Ascending aorta (tissue), 2 donors: ENCODE measurements at regions of chr12 and their contacts with region 1.

Region 1: GRCh38 chr12:12562585-12563261 is at the start of gene DUSP16:
- DNase-seq: peak; percentile 84 to 97
- H3K4me3 ChIP-seq: peak within 1 kb of the TSS; percentile 96 to 97
- H3K27ac ChIP-seq: peak within 1 kb of the TSS; percentile 100
- H3K4me1 ChIP-seq: peaks cover 0 to 15% of the 10 kb centered on the region in 2 donors
- H3K27me3 ChIP-seq: no peaks in the 10 kb centered on the region
- CTCF ChIP-seq: no peak
- total RNA-seq, gene DUSP16: 54.8 TPM

Region 2: GRCh38 chr12:12266873-12267741 is 295.6 kb before region 1 on chr12 and contains the start of gene LRP6:
- intact Hi-C with region 1: loop called (anchors 5 kb)
- DNase-seq: peak; percentile 35 to 92
- H3K4me3 ChIP-seq: peak within 1 kb of the TSS; percentile 63 to 87
- H3K27ac ChIP-seq: peak within 1 kb of the TSS; percentile 99
- H3K4me1 ChIP-seq: peaks cover 0 to 4% of the 10 kb centered on the region in 2 donors
- H3K27me3 ChIP-seq: no peaks in the 10 kb centered on the region
- CTCF ChIP-seq: no peak
- total RNA-seq, gene LRP6: 70.0 TPM

Region 3: DNA sequence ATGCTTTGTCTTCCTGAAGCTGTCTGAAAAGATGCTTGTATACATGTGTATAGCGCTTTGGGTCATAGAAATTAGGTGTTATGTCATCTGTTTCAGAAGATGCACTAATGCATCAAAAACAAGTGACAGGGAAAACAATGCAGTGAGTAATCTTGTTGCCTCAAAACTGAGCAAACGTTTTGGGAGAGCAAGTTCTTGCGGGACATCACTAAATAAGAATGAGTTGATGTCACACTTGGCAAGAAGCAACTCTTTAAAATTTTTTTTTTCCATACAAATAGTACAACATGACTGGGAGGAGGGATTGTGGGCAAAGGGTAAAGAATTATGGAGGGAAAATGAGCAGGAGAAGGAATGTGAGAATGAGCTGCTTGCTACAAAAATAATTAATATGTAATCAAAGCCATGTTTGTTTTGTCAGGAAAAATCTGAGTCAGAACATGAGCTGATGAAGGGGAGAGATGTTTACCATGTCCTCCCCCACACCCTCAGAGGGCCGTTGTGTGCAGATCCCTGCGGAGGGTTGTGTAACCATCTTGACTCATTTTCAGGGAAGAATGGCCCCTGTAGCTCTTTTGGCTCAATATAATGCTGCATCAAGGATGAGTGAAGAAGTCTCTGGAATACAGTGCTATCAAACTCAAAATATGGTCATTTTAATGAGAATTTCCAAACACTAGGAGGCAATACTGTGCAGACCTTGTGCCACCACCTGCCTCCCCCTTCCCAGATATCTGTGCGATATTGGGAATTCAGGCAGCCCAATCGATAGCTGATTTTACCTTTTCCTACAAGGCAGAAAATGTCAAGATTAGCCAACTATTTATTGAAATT is 164.5 kb before region 1 on chr12:
- intact Hi-C with region 1: loop called (anchors 5 kb)
- DNase-seq: peak in 1 of 2 donors; percentile 86
- H3K4me3 ChIP-seq: peak overlapping the region in 1 of 2 donors; percentile 23
- H3K27ac ChIP-seq: peak overlapping the region; percentile 67 to 81
- H3K4me1 ChIP-seq: peaks cover 6 to 20% of the 10 kb centered on the region in 2 donors
- H3K27me3 ChIP-seq: no peaks in the 10 kb centered on the region
- CTCF ChIP-seq: no peak

Region 4: DNA sequence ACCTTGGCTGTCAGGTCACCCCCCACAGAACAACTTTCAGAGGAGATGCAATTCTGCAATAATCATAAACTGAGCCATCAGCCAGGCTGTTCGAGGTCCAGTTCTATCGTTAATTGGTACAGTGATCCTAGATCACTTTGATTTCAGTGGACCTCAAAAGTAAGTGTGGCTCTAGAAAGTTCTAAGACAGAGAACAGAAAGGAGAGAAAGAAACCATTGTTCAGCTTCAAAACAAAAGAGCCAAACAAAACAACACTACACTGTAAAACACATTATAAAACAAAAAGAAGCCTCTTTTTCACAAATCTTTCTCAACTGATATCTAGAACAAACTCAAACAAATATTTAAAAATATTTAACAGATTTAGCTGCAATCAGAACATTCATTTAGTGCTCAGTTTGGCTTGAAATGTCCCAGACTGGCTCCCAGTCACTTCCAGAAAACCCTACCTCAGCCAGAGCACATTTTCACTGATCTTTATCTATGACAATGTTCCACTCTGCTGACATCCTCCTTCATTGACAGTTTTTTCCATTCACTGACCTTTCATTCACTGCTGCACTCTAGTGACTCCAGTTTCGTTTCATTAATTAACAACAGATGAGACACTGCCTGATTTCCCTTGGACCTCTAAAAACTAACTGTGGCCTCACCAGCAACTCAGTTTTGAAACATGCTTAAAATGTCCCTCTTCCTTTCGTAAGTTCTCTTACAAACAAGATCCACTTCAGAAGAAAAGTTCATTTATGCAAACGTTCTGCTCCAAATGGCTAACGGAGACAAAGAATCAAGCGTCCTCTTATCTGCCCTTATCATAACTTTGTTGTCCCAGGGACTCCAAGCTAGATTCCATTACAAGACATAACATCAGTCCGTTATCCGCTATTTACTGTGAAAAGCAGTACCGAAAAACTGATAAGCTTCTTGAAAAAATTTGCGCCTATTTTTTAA is 56.9 kb before region 1 on chr12:
- intact Hi-C with region 1: loop called (anchors 5 kb)
- DNase-seq: no peak
- H3K4me3 ChIP-seq: peak overlapping the region; percentile 24 to 34
- H3K27ac ChIP-seq: peak overlapping the region; percentile 63 to 66
- H3K4me1 ChIP-seq: peaks cover 0 to 21% of the 10 kb centered on the region in 2 donors
- H3K27me3 ChIP-seq: no peaks in the 10 kb centered on the region
- CTCF ChIP-seq: no peak

Region 5: DNA sequence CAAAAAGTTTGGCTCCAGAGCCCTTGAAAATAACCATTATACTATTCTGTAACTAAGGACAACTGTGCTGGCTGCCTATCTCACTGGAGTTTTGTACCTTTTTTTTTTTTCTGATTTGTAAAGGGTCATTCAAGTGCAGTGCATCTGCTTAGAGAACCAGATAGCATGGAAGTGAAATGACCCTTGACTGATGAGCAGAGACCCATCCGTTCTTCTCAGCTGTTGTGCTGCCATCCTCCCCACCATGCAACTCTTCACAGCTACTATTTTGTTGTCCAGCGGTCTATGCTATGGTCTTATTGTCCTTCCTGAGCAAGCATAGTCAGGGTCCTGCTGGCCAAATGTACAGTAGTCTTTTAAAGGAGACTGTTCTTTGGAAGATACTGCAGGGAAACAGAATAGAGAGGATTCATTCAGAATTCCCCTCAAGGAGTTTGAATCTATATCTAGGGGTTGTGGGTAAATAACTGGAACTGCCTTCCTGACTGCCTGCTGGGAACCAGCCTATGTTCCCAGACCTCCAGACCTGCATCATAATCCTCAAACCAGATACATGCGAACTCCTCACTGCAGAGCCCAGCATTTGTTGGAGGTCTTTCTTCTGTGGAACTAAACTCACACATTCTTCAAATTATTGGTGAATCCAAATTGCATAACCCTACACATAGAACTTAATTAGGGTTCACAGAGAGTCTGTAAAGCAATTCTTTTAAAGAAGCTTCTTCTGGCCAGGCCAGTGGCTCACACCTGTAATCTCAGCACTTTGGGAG is 92.2 kb after region 1 on chr12:
- intact Hi-C with region 1: loop called (anchors 5 kb)
- DNase-seq: no peak
- H3K4me3 ChIP-seq: no peak overlapping the region
- H3K27ac ChIP-seq: no peak overlapping the region
- H3K4me1 ChIP-seq: peaks cover under 1 to 7% of the 10 kb centered on the region in 2 donors
- H3K27me3 ChIP-seq: no peaks in the 10 kb centered on the region
- CTCF ChIP-seq: no peak

Region 6: DNA sequence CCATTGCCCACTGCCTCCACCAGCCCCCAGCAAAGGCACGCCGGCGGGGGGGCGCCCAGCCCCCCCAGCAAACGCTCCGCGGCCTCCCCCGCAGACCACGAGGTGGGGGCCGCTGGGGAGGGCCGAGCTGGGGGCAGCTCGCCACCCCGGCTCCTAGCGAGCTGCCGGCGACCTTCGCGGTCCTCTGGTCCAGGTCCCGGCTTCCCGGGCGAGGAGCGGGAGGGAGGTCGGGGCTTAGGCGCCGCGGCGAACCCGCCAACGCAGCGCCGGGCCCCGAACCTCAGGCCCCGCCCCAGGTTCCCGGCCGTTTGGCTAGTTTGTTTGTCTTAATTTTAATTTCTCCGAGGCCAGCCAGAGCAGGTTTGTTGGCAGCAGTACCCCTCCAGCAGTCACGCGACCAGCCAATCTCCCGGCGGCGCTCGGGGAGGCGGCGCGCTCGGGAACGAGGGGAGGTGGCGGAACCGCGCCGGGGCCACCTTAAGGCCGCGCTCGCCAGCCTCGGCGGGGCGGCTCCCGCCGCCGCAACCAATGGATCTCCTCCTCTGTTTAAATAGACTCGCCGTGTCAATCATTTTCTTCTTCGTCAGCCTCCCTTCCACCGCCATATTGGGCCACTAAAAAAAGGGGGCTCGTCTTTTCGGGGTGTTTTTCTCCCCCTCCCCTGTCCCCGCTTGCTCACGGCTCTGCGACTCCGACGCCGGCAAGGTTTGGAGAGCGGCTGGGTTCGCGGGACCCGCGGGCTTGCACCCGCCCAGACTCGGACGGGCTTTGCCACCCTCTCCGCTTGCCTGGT is 154.3 kb after region 1 on chr12 and contains the start of gene CDKN1B:
- intact Hi-C with region 1: loop called (anchors 5 kb)
- DNase-seq: peak; percentile 76 to 96
- H3K4me3 ChIP-seq: peak within 1 kb of the TSS; percentile 75 to 88
- H3K27ac ChIP-seq: peak within 1 kb of the TSS; percentile 96 to 99
- H3K4me1 ChIP-seq: peaks cover 3 to 34% of the 10 kb centered on the region in 2 donors
- H3K27me3 ChIP-seq: no peaks in the 10 kb centered on the region
- CTCF ChIP-seq: no peak
- total RNA-seq, gene CDKN1B: 65.1 TPM